Activated T-helper 2 cell treated with anti-CD3 and anti-CD28 coated beads, Interferon-gamma antibody, Interleukin-2, Interleukin-4, amounts not matched to agents 10 μg/mL and 5 μg/mL and 100 μg/mL, durations not matched to agents 14 hours and 24 hours and 36 hours (primary cell): ENCODE measurements at regions of chr1 and their contacts with region 1.

Region 1: DNA sequence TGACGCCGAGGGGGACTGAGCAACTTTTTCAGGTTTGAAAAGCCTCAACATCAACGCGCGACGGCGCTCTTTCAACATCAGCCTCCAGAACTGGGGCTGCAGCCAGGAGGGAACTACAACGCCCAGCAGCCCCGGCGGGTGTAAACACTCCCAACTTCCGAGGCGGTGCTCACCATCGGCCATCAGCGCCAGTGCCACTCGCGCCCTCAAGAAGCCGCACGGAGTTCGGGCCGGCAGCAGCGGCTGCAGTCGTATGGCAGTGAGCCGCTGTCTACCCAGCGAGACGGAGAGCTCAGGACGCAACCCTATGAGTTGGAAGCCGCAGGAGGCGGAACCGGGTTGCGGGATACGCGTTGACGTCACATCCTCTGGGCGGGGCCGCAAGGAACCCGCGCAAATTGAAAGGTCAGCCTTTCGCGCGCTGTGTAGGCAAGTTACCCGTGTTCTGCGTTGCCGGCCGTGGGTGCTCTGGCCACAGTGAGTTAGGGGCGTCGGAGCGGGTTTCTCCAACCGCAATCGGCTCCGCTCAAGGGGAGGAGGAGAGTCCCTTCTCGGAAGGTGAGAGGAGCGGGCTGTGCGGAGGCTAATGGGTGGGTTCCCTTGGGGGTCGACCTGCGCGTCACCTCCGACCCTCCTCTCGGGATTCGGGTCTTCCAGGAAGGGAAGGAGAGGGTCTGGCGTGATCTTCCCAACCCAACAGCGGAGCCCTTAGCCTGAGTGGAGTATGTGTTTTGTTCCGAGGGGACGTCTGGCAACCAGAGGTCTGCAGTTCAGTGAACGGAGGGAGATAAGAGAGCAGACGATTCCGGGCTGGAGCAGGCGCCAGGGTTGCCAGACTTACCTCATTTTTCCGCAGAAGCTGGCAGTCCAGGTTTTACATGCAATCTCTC is at the start of gene EXO1:
- DNase-seq: peak; percentile 86
- H3K4me3 Mint-ChIP-seq: peak within 1 kb of the TSS; percentile 98
- H3K27ac Mint-ChIP-seq: peak within 1 kb of the TSS; percentile 100
- H3K4me1 Mint-ChIP-seq: peaks cover 26% of the 10 kb centered on the region
- H3K27me3 Mint-ChIP-seq: peaks cover 7% of the 10 kb centered on the region
- total RNA-seq, gene EXO1: 49.2 and 52.5 TPM in 2 replicates

Region 2: GRCh38 chr1:241519308-241520079 is 328.5 kb before region 1 on chr1 and contains the start of gene FH:
- intact Hi-C with region 1: loop called (anchors 1 kb)
- DNase-seq: peak; percentile 92
- H3K4me3 Mint-ChIP-seq: peak within 1 kb of the TSS; percentile 90
- H3K27ac Mint-ChIP-seq: peak within 1 kb of the TSS; percentile 79
- H3K4me1 Mint-ChIP-seq: peaks cover 21% of the 10 kb centered on the region
- H3K27me3 Mint-ChIP-seq: peaks cover 26% of the 10 kb centered on the region
- total RNA-seq, gene FH: 96.5 and 102 TPM in 2 replicates

Region 3: DNA sequence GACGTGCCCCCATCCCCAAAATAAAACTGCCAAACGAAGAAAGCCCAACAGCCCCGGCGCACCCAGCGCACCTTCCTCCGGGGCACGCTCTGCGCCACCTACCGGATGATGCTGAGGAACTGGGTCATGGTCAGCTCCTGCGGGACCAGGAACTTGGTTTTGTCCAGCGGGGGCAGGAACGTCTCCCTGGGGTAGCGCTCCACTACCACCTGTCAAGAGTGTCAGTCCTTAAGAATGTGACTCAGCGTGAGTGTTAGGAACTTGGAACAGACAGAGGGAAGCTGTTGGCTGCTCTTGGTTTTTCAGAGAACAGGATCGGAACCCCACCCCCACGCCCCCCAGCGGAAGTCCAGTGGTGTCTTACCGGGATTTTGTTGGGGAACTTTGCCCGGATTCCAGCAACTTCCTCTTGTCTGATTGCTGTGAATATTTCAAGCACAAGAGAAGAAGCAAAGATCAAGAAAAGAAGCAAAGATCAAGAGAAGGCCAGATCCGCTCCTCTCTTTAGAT is 150.4 kb after region 1 on chr1:
- intact Hi-C with region 1: loop called (anchors 5 kb)
- DNase-seq: peak; percentile 26
- H3K4me3 Mint-ChIP-seq: peak overlapping the region; percentile 68
- H3K27ac Mint-ChIP-seq: no peak overlapping the region
- H3K4me1 Mint-ChIP-seq: peaks cover 6% of the 10 kb centered on the region
- H3K27me3 Mint-ChIP-seq: no peaks in the 10 kb centered on the region